CD14-positive monocyte (primary cell): ENCODE measurements at regions of chr19 and their contacts with region 1.

Region 1: DNA sequence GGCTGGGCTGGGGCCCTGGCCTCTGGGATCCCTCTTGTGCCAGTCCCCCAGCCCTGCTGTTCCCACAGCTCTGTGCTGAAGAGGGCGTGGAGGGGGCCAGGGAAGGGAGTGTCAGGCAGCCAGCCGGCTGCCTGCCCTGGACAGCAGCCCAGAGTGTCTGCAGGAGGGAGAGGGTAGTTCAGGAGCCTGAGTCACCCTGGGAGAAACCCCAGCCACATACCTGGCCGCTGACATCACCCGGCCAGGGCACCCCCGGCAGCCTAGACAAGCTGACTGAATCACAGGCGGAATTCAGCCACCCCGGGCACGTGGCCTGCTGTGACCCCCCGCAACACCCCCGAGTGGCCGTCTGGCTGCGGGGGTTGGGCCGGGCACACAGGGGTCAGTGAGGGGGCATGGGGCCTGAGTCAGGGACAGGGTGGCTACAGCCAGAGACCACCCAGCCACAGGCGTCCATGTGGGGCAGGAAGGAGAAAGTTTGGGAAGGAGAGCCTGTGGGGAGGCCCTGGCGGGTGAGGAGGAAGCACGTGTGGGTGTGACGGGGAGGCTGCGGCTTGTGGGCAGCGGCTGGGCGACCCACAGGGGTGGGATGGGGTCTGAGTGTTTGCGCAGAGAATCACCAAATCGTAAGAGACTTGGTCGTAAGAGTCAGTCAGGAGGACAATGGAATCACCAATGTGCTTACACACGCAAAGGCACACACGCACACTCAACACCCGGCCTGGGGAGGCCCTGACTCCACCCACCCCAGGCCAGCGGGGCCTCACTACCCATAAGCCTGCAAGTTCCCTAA is 11.9 kb upstream of the FOSB start:
- DNase-seq: peak; percentile 98 to 100 (median 98)
- H3K4me3 ChIP-seq: peak overlapping the region in 1 of 3 experiments; percentile 11
- H3K4me3 Mint-ChIP-seq: peak overlapping the region; percentile 60 to 75
- H3K27ac ChIP-seq: peak overlapping the region; percentile 92
- H3K27ac Mint-ChIP-seq: peak overlapping the region; percentile 97 to 99 (median 98)
- H3K4me1 ChIP-seq: peaks cover 56 to 61% of the 10 kb centered on the region in 2 donors
- H3K4me1 Mint-ChIP-seq: peaks cover 51% of the 10 kb centered on the region
- H3K27me3 ChIP-seq: peaks cover 0 to 13% of the 10 kb centered on the region in 2 donors
- H3K27me3 Mint-ChIP-seq: peaks cover 19 to 22% (median 19%) of the 10 kb centered on the region in 3 donors
- CTCF ChIP-seq: no peak

Region 2: GRCh38 chr19:45323671-45324081 is 132.2 kb before region 1 on chr19:
- intact Hi-C with region 1: no loop called
- DNase-seq: no peak
- H3K4me3 ChIP-seq: no peak overlapping the region
- H3K4me3 Mint-ChIP-seq: peak overlapping the region; percentile 24 to 52
- H3K27ac ChIP-seq: no peak overlapping the region
- H3K27ac Mint-ChIP-seq: no peak overlapping the region
- H3K4me1 ChIP-seq: peaks cover 3 to 7% of the 10 kb centered on the region in 2 donors
- H3K4me1 Mint-ChIP-seq: peaks cover 6% of the 10 kb centered on the region
- H3K27me3 ChIP-seq: peaks cover 8 to 31% of the 10 kb centered on the region in 2 donors
- H3K27me3 Mint-ChIP-seq: peaks cover 31 to 47% (median 33%) of the 10 kb centered on the region in 3 donors
- CTCF ChIP-seq: no peak

Region 3: GRCh38 chr19:45428384-45429231 is 27.3 kb before region 1 on chr19:
- intact Hi-C with region 1: no loop called
- DNase-seq: peak; percentile 52 to 71 (median 60)
- H3K4me3 ChIP-seq: peak overlapping the region; percentile 15 to 65 (median 27)
- H3K4me3 Mint-ChIP-seq: peak overlapping the region; percentile 75 to 88
- H3K27ac ChIP-seq: peak overlapping the region in 1 of 2 donors; percentile 22
- H3K27ac Mint-ChIP-seq: peak overlapping the region in 6 of 7 donors; percentile 73 to 89 (median 83)
- H3K4me1 ChIP-seq: peaks cover 46 to 61% of the 10 kb centered on the region in 2 donors
- H3K4me1 Mint-ChIP-seq: peaks cover 49% of the 10 kb centered on the region
- H3K27me3 ChIP-seq: peaks cover 3 to 5% of the 10 kb centered on the region in 2 donors
- H3K27me3 Mint-ChIP-seq: peaks cover 9 to 18% (median 15%) of the 10 kb centered on the region in 3 donors
- CTCF ChIP-seq: peak; percentile 30

Region 4: GRCh38 chr19:45467456-45468158 is 11.7 kb after region 1 on chr19 and contains the start of gene FOSB:
- intact Hi-C with region 1: loop called (anchors 1 to 2 kb)
- DNase-seq: peak; percentile 92 to 97 (median 97)
- H3K4me3 ChIP-seq: peak within 1 kb of the TSS; percentile 84 to 98 (median 87)
- H3K4me3 Mint-ChIP-seq: peak within 1 kb of the TSS; percentile 99
- H3K27ac ChIP-seq: peak within 1 kb of the TSS; percentile 88 to 96
- H3K27ac Mint-ChIP-seq: peak within 1 kb of the TSS; percentile 90 to 97 (median 96)
- H3K4me1 ChIP-seq: peaks cover 34 to 35% of the 10 kb centered on the region in 2 donors
- H3K4me1 Mint-ChIP-seq: peaks cover 40% of the 10 kb centered on the region
- H3K27me3 ChIP-seq: peaks cover 16 to 27% of the 10 kb centered on the region in 2 donors
- H3K27me3 Mint-ChIP-seq: peaks cover 37 to 60% (median 59%) of the 10 kb centered on the region in 3 donors
- CTCF ChIP-seq: no peak
- polyA plus RNA-seq, gene FOSB: 27.3 to 840 (median 28.2) TPM

Region 5: DNA sequence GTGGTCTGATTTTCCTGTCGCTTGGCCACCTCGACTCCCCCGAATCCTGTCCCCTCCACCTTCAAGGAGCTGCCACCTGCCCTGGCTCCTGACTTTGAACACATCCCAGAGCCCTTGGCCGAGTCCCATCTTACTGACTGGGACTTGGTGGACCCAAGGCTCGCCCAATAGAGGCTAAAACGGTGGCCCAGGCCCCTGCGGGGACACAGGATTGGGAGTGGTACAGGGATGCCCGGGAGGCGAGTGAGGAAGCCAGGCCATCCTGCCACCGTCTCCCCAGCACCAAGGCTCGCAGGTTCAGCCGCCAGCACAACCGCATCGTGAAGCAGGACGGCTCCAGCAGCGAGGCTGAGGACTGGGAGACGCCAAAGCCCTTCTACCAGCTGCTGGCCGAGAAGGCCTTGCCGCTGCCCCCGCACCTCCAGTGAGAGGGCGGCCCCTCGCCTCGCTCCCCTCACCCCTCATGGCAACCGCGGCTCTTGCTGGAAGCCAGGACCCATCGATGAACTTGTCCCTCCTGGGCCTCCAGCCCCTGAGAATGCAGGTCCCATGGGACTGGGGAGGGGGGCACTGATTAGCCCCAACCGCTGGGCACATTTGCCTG is 307.9 kb after region 1 on chr19:
- intact Hi-C with region 1: no loop called
- DNase-seq: no peak
- H3K4me3 ChIP-seq: no peak overlapping the region
- H3K4me3 Mint-ChIP-seq: no peak overlapping the region
- H3K27ac ChIP-seq: no peak overlapping the region
- H3K27ac Mint-ChIP-seq: no peak overlapping the region
- H3K4me1 ChIP-seq: peaks cover 7 to 13% of the 10 kb centered on the region in 2 donors
- H3K4me1 Mint-ChIP-seq: peaks cover 4% of the 10 kb centered on the region
- H3K27me3 ChIP-seq: peaks cover 19 to 59% of the 10 kb centered on the region in 2 donors
- H3K27me3 Mint-ChIP-seq: peaks cover 57 to 86% (median 67%) of the 10 kb centered on the region in 3 donors
- CTCF ChIP-seq: no peak